ENCODE measurements at regions of chr3 and their contacts with region 1.

Region 1: DNA sequence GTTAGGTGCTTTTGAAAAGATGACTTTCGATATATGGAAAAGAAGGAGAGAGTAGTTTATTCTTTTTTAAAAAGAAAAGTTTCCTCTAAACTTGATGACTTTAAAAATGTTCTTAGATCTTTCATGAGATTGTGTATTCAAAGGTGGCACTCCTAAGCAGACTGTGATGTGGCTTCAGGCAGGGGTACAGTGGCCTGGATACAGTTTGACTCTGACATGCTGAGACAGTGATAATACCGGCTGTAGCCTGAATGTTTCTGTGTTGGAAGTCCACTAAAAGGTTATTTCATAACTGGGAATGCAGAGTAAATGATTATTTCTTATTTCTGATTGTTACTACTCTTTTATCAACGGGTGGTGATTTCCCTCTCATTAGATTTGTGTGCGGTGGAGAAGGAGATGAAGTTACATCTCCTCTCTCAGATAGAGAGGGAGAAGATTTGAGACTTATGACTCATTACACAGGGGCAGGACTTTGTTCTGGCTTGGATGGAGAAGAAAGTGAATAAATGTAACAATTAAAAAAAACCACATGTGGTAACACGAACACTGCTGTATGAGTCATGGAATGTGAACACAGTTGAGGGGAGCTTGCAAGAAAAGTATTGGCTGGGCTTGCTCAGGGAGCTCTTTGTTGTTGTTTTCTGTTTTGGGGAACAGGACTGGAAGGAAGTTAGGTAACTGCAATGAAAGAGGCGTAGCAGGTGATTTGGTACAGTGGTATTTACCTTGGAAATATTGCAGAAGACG is 21.6 kb downstream of the SPTSSB start:
- DNase-seq: no peak
- H3K4me3 ChIP-seq: no peak overlapping the region
- H3K27ac ChIP-seq: no peak overlapping the region
- H3K4me1 ChIP-seq: no peaks in the 10 kb centered on the region
- H3K27me3 ChIP-seq: no peaks in the 10 kb centered on the region
- CTCF ChIP-seq: no peak
- EP300 ChIP-seq: no peak
- POLR2A ChIP-seq: no peak

Region 2: DNA sequence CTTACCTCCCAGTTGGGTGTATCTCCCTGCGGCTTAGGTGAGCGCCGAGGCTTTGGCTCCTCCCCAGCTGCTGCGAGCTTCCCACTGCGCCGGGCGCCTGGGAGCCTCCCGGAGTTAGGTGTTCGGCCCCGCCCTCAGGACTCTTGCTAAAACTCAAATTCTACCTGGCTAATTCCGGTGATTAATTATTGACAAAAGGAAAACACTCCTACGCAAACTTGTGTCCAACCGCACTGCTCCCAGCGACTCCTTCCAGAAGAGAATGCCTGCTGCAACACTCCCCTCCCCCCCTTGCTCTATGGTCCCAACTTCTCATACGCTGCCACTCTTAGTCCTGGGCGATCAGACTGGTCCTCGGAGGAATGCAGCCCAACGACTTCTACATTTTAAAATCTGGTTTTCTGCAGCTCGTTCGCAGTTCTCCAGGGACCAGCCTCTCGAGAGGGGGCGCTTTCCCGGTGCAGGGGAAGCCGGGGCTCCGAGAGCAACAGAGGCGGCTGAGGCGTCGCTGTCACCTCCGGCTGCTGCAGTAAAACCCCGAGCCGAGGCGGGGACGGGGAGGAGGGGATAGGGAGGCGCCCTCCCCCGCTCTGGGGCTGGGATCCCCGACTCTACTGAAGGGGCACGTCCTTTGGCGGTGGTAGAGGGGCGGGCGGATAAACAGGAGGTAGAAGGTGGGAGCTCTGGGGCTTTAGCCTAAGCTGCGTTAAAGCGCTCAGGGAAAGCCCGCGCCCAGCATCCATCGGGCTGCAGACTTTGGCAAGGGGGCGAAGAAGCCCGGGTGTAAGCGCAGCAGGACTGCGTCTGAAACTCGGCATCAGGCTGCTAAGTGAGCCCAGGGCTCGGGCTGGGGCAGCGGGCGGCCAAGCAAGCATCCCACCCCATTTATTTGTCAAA is 22.0 kb after region 1 on chr3 and contains the start of gene SPTSSB:
- intact Hi-C with region 1: loop called in 1 of 4 experiments (anchors 2 kb)
- DNase-seq: peak in 2 of 5 donors; percentile 9 to 16
- H3K4me3 ChIP-seq: peak within 1 kb of the TSS; percentile 39
- H3K27ac ChIP-seq: no peak within 1 kb of the TSS
- H3K4me1 ChIP-seq: peaks cover 4% of the 10 kb centered on the region
- H3K27me3 ChIP-seq: no peaks in the 10 kb centered on the region
- CTCF ChIP-seq: no peak
- EP300 ChIP-seq: no peak
- POLR2A ChIP-seq: no peak
- total RNA-seq, gene SPTSSB: 0.23 to 1.4 (median 0.46) TPM in 3 of 7 donors, not detected in the others

Measured in ovary (tissue), 10 donors.